Astrocyte of the cerebellum (primary cell): ENCODE measurements at regions of chr17 and their contacts with region 1.

Region 1: GRCh38 chr17:15429266-15429665 is 38.2 kb downstream of the CDRT4 start:
- DNase-seq: no peak
- H3K4me3 ChIP-seq: no peak overlapping the region
- CTCF ChIP-seq: no peak

Region 2: GRCh38 chr17:15377616-15378015 is 51.6 kb before region 1 on chr17:
- in situ Hi-C with region 1: no loop called
- DNase-seq: peak; percentile 76
- H3K4me3 ChIP-seq: peak overlapping the region; percentile 22
- CTCF ChIP-seq: no peak

Region 3: GRCh38 chr17:15498117-15498516 is 68.9 kb after region 1 on chr17:
- in situ Hi-C with region 1: loop called (anchors 5 kb)
- DNase-seq: no peak
- H3K4me3 ChIP-seq: no peak overlapping the region
- CTCF ChIP-seq: no peak